B cell (primary cell): ENCODE measurements at regions of chr6 and their contacts with region 1.

Region 1: GRCh38 chr6:5143634-5144311 is 58.6 kb downstream of the PPP1R3G start:
- DNase-seq: peak; percentile 85
- ATAC-seq: peak; percentile 70
- H3K4me3 ChIP-seq: no peak overlapping the region
- H3K4me3 Mint-ChIP-seq: no peak overlapping the region
- H3K27ac ChIP-seq: no peak overlapping the region
- H3K27ac Mint-ChIP-seq: no peak overlapping the region
- H3K4me1 ChIP-seq: peaks cover 10 to 22% of the 10 kb centered on the region in 2 donors
- H3K4me1 Mint-ChIP-seq: peaks cover 25% of the 10 kb centered on the region
- H3K27me3 ChIP-seq: no peaks in the 10 kb centered on the region
- H3K27me3 Mint-ChIP-seq: no peaks in the 10 kb centered on the region
- CTCF ChIP-seq: peak; percentile 96

Region 2: GRCh38 chr6:5003604-5004372 is 140.0 kb before region 1 on chr6 and contains the start of gene RPP40:
- CTCF ChIA-PET with region 1: interaction called, 3 read pairs
- POLR2A ChIA-PET with region 1: no interaction called
- intact Hi-C with region 1: loop called (anchors 5 kb)
- DNase-seq: peak; percentile 99
- ATAC-seq: peak; percentile 92
- H3K4me3 ChIP-seq: peak within 1 kb of the TSS; percentile 70 to 82 (median 71)
- H3K4me3 Mint-ChIP-seq: peak within 1 kb of the TSS; percentile 98
- H3K27ac ChIP-seq: peak within 1 kb of the TSS; percentile 81 to 90
- H3K27ac Mint-ChIP-seq: peak within 1 kb of the TSS; percentile 99
- H3K4me1 ChIP-seq: peaks cover 6 to 14% of the 10 kb centered on the region in 2 donors
- H3K4me1 Mint-ChIP-seq: peaks cover 10% of the 10 kb centered on the region
- H3K27me3 ChIP-seq: no peaks in the 10 kb centered on the region
- H3K27me3 Mint-ChIP-seq: no peaks in the 10 kb centered on the region
- CTCF ChIP-seq: peak; percentile 82
- total RNA-seq, gene RPP40: 3.8 TPM in 2 replicates

Region 3: GRCh38 chr6:5174244-5174643 is 30.5 kb after region 1 on chr6:
- CTCF ChIA-PET with region 1: interaction called, 10 read pairs
- POLR2A ChIA-PET with region 1: no interaction called
- intact Hi-C with region 1: no loop called
- DNase-seq: peak; percentile 56
- ATAC-seq: peak; percentile 82
- H3K4me3 ChIP-seq: peak overlapping the region; percentile 13 to 54 (median 28)
- H3K4me3 Mint-ChIP-seq: peak overlapping the region; percentile 81
- H3K27ac ChIP-seq: peak overlapping the region; percentile 67 to 68
- H3K27ac Mint-ChIP-seq: peak overlapping the region; percentile 79
- H3K4me1 ChIP-seq: peaks cover 21 to 31% of the 10 kb centered on the region in 2 donors
- H3K4me1 Mint-ChIP-seq: peaks cover 30% of the 10 kb centered on the region
- H3K27me3 ChIP-seq: no peaks in the 10 kb centered on the region
- H3K27me3 Mint-ChIP-seq: no peaks in the 10 kb centered on the region
- CTCF ChIP-seq: no peak

Region 4: DNA sequence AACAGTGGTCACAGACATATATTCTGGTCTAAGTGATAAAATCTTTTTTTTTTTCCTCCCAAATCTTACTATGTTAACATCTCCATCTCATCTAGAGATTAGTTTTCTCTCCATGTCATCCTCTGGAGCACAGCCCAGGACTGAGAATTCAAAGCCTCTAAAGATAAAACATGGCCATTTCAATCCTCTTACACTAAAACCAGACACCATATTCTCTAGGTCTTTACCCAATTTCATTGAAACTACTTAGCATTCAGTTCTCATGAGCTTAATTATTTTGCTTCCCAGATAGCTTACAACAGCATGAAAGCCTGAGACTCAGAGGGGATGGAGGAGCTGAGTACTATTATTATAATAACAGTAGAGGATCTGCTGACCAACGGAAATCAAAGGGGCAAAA is 210.2 kb after region 1 on chr6:
- CTCF ChIA-PET with region 1: no interaction called
- POLR2A ChIA-PET with region 1: no interaction called
- intact Hi-C with region 1: no loop called
- DNase-seq: no peak
- ATAC-seq: no peak
- H3K4me3 ChIP-seq: no peak overlapping the region
- H3K4me3 Mint-ChIP-seq: no peak overlapping the region
- H3K27ac ChIP-seq: no peak overlapping the region
- H3K27ac Mint-ChIP-seq: no peak overlapping the region
- H3K4me1 ChIP-seq: peaks cover 0 to 7% of the 10 kb centered on the region in 2 donors
- H3K4me1 Mint-ChIP-seq: peaks cover 16% of the 10 kb centered on the region
- H3K27me3 ChIP-seq: no peaks in the 10 kb centered on the region
- H3K27me3 Mint-ChIP-seq: no peaks in the 10 kb centered on the region
- CTCF ChIP-seq: no peak

Region 5: GRCh38 chr6:5379647-5380242 is 236.0 kb after region 1 on chr6:
- CTCF ChIA-PET with region 1: interaction called, 25 read pairs
- POLR2A ChIA-PET with region 1: no interaction called
- intact Hi-C with region 1: loop called (anchors 1 kb)
- DNase-seq: peak; percentile 15
- ATAC-seq: no peak
- H3K4me3 ChIP-seq: no peak overlapping the region
- H3K4me3 Mint-ChIP-seq: no peak overlapping the region
- H3K27ac ChIP-seq: no peak overlapping the region
- H3K27ac Mint-ChIP-seq: no peak overlapping the region
- H3K4me1 ChIP-seq: no peaks in the 10 kb centered on the region
- H3K4me1 Mint-ChIP-seq: no peaks in the 10 kb centered on the region
- H3K27me3 ChIP-seq: no peaks in the 10 kb centered on the region
- H3K27me3 Mint-ChIP-seq: no peaks in the 10 kb centered on the region
- CTCF ChIP-seq: peak; percentile 47

Region 6: DNA sequence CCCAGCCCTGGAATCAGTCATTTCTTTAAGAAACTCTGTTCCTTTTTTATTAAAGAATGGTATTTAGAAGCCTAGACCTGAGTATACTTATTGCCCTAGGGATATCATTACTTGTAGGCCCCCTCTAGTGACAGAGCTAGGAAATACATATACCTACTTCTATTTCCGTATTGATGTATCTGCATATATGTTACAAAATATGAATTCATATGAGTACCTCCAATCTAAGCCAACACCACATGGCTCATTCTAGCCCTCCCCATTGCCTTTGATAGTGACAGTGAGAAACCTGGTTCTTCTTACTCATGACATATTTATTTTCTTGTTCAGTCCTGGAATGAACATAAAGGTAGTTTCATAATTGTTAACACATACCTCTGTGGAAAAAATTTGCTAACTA is 254.8 kb after region 1 on chr6:
- CTCF ChIA-PET with region 1: interaction called, 54 read pairs
- POLR2A ChIA-PET with region 1: no interaction called
- intact Hi-C with region 1: loop called (anchors 1 kb)
- DNase-seq: peak; percentile 63
- ATAC-seq: peak; percentile 82
- H3K4me3 ChIP-seq: no peak overlapping the region
- H3K4me3 Mint-ChIP-seq: no peak overlapping the region
- H3K27ac ChIP-seq: no peak overlapping the region
- H3K27ac Mint-ChIP-seq: no peak overlapping the region
- H3K4me1 ChIP-seq: no peaks in the 10 kb centered on the region
- H3K4me1 Mint-ChIP-seq: peaks cover 4% of the 10 kb centered on the region
- H3K27me3 ChIP-seq: no peaks in the 10 kb centered on the region
- H3K27me3 Mint-ChIP-seq: no peaks in the 10 kb centered on the region
- CTCF ChIP-seq: peak; percentile 74